Endothelial cell of umbilical vein (primary cell): ENCODE measurements at regions of chr1 and their contacts with region 1.

Region 1: GRCh38 chr1:24070821-24071393 is 41.0 kb downstream of the MYOM3 start:
- DNase-seq: peak; percentile 77
- H3K4me3 ChIP-seq: no peak overlapping the region
- H3K27ac ChIP-seq: no peak overlapping the region
- H3K4me1 ChIP-seq: no peaks in the 10 kb centered on the region
- H3K27me3 ChIP-seq: peaks cover 0 to 3% of the 10 kb centered on the region in 2 experiments
- CTCF ChIP-seq: peak; percentile 85 to 93
- POLR2A ChIP-seq: no peak

Region 2: DNA sequence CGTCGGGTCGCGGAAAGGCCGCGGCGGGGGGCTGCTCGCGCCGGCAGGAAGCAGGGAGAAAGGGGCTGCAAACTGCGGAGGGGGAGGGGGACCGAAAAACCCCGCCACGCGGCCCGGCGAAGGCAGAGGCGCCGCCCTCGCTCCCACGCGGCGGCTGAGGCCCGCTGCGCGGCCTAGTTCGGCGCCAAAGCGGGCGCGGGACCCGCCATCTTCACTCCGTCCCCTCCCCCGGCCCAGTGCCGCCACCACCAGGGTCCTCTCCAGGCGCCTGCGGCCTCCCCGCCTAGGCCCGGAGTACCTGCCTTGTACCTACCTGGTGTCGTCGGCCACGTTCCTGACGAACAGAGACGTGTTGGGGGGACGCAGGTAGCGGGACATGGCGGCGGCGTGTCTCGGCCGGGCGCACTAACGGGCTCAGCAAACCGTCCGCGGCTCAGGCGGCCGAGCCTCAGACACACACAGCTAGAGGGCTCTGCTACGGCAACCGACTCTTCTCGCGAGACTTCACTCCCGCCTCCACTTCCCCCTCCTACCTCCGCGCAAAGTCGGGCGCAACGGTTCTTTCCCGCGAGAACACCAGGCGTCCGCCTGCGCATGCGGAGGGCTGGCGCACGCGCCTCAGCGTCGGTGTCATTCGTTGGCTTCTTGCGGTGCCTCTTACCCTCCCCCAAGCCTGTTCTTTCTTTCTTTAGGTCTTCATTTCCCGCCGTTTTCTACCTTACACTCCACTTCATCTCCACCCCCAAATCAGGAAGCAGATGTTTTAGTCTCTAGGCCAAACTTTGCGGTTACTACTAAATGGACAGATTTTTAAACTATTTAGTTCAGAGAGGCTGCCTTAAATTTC is 90.8 kb before region 1 on chr1 and contains the start of gene SRSF10:
- CTCF ChIA-PET with region 1: no interaction called
- POLR2A ChIA-PET with region 1: no interaction called
- dilution Hi-C with region 1: no loop called
- intact Hi-C with region 1: loop called (anchors 2 kb)
- DNase-seq: peak; percentile 99
- H3K4me3 ChIP-seq: peak within 1 kb of the TSS; percentile 79 to 100 (median 85)
- H3K27ac ChIP-seq: peak within 1 kb of the TSS; percentile 94
- H3K4me1 ChIP-seq: peaks cover 46% of the 10 kb centered on the region
- H3K27me3 ChIP-seq: no peaks in the 10 kb centered on the region
- CTCF ChIP-seq: peak in 1 of 2 donors; percentile 39
- POLR2A ChIP-seq: peak; percentile 98
- total RNA-seq, gene SRSF10: 124 and 125 TPM in 2 replicates

Region 3: DNA sequence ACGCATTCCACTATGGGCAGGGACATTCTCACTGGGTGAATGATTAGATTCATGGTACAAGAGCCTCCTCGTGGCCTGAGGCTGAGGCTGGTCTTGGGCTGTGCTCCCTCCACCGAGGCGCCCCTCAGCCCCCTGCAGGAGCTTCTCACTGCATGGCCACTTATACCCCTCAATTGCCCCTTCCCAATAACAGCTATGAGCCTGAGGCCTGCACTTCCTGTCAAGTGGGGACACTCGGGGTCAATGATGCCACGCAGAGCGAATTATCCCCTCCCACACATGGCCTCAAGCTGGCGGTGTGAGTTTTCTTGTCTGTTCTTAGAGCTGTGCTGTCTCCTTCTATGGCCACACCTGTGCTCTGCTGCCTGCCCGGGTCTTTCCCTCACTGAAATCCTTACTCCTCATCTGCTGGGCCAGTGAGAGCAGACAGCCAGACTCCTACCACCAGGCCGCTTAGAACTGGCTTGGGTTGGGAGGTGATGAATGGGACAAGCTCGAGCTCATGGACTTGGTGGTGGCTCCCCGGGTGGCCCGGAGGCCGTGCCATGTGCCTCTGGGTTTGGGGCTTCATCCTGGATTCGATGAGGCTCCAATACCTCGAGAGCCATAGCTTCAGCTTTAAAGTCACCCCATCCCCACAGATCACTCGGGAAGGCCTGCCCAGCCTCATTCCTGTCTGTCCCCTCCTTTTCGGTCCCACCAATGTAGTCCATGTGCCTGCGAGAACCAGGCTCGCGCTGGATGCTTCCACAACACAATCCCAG is 10.6 kb before region 1 on chr1:
- CTCF ChIA-PET with region 1: interaction called, 11 read pairs
- POLR2A ChIA-PET with region 1: no interaction called
- dilution Hi-C with region 1: no loop called
- intact Hi-C with region 1: no loop called
- DNase-seq: no peak
- H3K4me3 ChIP-seq: no peak overlapping the region
- H3K27ac ChIP-seq: no peak overlapping the region
- H3K4me1 ChIP-seq: no peaks in the 10 kb centered on the region
- H3K27me3 ChIP-seq: no peaks in the 10 kb centered on the region
- CTCF ChIP-seq: no peak
- POLR2A ChIP-seq: no peak

Region 4: GRCh38 chr1:24111996-24112779 is 41.3 kb after region 1 on chr1 and contains the start of gene MYOM3:
- CTCF ChIA-PET with region 1: interaction called, 45 read pairs
- POLR2A ChIA-PET with region 1: interaction called, 3 read pairs
- dilution Hi-C with region 1: no loop called
- intact Hi-C with region 1: loop called (anchors 1 kb)
- DNase-seq: peak; percentile 63
- H3K4me3 ChIP-seq: no peak within 1 kb of the TSS
- H3K27ac ChIP-seq: no peak within 1 kb of the TSS
- H3K4me1 ChIP-seq: peaks cover 25% of the 10 kb centered on the region
- H3K27me3 ChIP-seq: peaks cover 0 to 2% of the 10 kb centered on the region in 2 experiments
- CTCF ChIP-seq: peak; percentile 32 to 60
- POLR2A ChIP-seq: no peak
- total RNA-seq, gene MYOM3: 0.18 and 0.40 TPM in 2 replicates

Region 5: DNA sequence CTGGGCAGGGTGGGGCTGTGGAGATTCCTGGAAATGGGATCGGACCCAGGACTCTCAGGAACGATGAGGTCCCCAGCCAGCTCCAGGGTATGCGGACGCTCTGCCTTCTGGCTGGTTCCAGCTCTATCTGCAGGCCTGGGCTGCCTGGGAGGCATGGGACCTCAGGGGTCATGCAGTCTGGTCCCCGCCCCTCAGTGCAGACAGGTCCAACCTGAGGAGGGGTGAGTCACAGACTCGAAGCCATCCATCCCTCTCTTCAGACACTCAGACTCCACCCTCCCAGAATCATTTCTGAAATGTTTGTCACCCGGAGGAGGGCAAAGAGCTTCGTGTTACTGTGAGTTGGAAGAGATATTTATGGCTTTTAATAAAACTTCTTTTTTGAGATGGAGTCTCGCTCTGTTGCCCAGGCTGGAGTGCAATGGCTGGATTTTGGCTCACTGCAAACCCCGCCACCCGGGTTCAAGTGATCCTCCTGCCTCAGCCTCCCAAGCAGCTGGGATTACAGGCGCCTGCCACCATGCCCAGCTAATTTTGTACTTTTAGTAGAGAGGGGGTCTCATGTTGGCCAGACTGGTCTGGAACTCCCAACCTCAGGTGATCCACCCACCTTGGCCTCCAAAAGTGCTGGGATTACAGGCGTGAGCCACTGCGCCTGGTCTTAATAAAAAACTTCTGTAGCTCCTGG is 47.0 kb after region 1 on chr1:
- CTCF ChIA-PET with region 1: interaction called, 45 read pairs
- POLR2A ChIA-PET with region 1: no interaction called
- dilution Hi-C with region 1: no loop called
- intact Hi-C with region 1: no loop called
- DNase-seq: no peak
- H3K4me3 ChIP-seq: no peak overlapping the region
- H3K27ac ChIP-seq: no peak overlapping the region
- H3K4me1 ChIP-seq: no peaks in the 10 kb centered on the region
- H3K27me3 ChIP-seq: peaks cover 0 to 2% of the 10 kb centered on the region in 2 experiments
- CTCF ChIP-seq: no peak
- POLR2A ChIP-seq: no peak

Region 6: DNA sequence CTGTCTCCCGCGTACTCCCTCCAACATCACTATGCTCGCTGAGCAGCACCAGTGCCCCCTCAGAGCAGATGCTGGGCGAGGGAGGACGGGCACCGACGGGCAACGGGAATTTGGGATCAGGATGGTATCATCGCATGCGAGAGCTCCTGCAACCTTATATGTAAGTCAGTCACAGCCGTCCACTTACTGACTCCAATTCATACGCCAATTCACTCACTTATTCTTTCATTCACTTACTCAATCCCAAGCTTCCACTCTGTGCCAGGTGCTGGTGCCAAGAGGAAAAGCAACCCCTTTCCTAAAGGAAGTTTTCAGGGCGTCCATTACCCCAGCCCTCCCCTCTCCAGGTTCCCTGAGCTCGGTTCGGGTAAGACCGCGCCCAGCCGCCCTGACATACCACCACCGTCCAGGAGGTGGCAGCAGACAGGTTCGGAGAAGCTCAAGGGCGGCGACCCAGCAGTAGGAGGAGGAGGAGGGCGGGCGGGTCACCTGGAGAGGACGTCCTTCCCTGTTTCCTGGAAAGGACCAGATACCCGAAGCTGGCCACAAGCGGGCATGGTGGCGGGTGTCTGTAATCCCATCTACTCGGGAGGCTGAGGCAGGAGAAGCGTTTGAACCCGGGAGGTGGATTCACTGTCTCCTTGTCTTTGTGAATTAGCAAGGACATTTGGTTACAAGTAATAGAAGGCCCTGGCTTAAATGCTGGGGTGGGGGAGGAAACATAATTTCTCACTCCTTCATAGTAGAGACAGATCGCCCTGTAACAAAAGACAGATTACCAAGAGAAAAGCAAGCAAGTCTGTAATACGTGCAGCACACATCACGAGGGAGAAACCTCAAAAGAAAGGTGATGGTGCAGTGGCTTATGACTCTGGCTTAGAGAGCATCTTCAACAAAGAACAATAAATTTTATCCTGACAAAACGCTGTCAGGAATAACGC is 79.6 kb after region 1 on chr1:
- CTCF ChIA-PET with region 1: interaction called, 17 read pairs
- POLR2A ChIA-PET with region 1: no interaction called
- dilution Hi-C with region 1: no loop called
- intact Hi-C with region 1: loop called (anchors 1 kb)
- DNase-seq: peak; percentile 83
- H3K4me3 ChIP-seq: peak overlapping the region in 1 of 3 experiments; percentile 19
- H3K27ac ChIP-seq: no peak overlapping the region
- H3K4me1 ChIP-seq: peaks cover 11% of the 10 kb centered on the region
- H3K27me3 ChIP-seq: peaks cover 11% of the 10 kb centered on the region in 2 experiments
- CTCF ChIP-seq: peak; percentile 79 to 94
- POLR2A ChIP-seq: no peak

Region 7: DNA sequence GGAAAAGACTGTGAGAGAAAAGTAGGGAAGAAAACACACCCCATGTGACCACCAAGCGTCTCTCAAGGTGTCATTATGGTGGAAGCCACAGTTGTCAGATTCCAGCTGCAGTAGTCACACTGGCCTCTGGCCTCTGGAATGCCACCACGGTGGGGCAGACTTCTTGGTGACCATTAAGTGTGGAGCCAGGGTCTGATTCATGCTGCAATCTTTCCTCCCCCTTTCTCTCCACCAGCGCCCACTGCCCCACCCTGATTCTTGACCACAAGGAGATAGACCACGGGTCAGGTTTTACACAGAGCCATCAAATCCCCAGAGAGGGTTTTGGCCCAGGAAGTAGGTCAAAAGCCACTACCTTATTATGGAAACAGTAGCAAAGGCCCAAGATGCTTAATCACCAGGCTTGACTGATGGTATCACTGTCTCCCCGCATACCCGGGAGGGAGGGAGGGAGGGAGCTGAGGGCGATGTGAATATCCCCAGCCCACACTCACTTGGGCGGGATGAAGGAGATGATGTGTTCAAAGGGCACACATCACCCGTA is 195.6 kb after region 1 on chr1:
- CTCF ChIA-PET with region 1: no interaction called
- POLR2A ChIA-PET with region 1: no interaction called
- dilution Hi-C with region 1: no loop called
- intact Hi-C with region 1: no loop called
- DNase-seq: no peak
- H3K4me3 ChIP-seq: no peak overlapping the region
- H3K27ac ChIP-seq: no peak overlapping the region
- H3K4me1 ChIP-seq: no peaks in the 10 kb centered on the region
- H3K27me3 ChIP-seq: peaks cover 3 to 8% of the 10 kb centered on the region in 2 experiments
- CTCF ChIP-seq: no peak
- POLR2A ChIP-seq: no peak

Region 8: DNA sequence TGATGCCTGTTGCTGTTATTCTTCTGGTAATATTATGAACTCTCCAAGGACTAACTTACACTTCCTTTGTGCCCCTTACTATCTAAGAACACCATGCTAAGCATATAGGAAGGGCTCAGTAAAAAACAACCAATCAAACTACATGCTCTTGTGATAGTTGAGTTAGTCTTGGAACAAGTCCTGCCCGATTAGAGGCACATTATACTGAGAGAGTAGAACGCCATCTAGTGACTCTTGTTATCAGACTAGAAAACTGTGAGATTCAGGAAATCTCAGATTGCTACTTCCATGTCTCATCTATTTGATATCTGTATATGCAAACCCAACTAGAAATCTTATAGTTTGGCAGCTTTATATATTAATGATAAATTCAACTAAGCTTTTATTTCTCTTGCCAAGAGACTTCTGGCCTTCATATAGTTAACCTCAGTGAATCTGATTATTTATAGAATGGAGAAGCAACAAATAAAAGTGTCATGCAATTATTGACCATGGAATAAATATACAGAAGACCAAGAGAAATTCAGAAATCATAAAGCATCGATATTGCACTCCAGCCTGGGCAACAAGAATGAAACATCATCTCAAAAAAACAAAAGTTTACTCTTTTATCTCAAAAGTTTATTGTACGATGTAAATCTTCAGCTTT is 564.4 kb after region 1 on chr1:
- CTCF ChIA-PET with region 1: interaction called, 3 read pairs
- POLR2A ChIA-PET with region 1: no interaction called
- dilution Hi-C with region 1: no loop called
- intact Hi-C with region 1: loop called (anchors 5 kb)
- DNase-seq: peak; percentile 79
- H3K4me3 ChIP-seq: no peak overlapping the region
- H3K27ac ChIP-seq: no peak overlapping the region
- H3K4me1 ChIP-seq: no peaks in the 10 kb centered on the region
- H3K27me3 ChIP-seq: peaks cover 8 to 14% of the 10 kb centered on the region in 2 experiments
- CTCF ChIP-seq: peak; percentile 36 to 44
- POLR2A ChIP-seq: no peak